Activated T-helper 2 cell treated with anti-CD3 and anti-CD28 coated beads, Interferon-gamma antibody, Interleukin-2, Interleukin-4, amounts not matched to agents 10 μg/mL and 5 μg/mL and 100 μg/mL, durations not matched to agents 14 hours and 24 hours and 36 hours (primary cell): ENCODE measurements at regions of chr13 and their contacts with region 1.

Region 1: DNA sequence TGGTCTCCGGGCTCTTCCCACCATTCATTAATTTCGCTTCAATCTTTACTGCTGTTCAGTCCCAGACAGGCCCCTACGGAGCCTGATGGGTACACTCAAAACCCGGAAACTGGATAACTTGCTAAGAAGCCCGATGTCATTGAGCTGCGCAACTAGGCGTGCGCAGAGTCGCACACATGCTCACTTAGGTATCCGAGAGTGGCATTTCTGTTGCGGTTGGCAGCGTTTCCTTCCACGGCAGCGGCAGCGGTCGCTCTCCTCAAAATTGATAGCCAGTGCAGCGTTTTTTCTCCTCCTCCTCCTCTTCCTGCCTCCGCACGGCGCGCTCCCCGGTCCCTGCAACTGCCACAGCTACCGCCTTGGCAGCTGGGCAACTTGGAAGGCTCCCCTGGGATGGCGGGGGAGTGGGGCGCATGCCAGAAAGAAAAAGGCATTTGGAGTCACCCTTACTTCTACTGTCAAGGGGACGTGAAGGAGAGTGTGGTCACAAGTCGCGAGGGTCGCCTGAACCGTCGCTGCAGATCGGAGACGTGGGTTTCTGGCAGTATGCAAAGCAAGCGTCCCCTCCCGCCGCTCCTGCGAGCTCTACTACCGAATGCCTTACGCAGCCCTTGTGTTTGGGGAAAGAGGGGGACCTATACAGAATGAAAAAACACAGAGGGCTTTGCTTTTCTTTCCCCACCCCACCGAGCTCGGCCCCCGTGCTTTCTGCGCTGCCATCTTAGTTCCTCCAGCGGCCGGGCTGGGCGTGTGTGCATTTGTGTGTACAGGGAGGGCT is 2.4 kb upstream of the MYCBP2 start:
- DNase-seq: peak; percentile 93
- H3K4me3 Mint-ChIP-seq: peak overlapping the region; percentile 99
- H3K27ac Mint-ChIP-seq: peak overlapping the region; percentile 99
- H3K4me1 Mint-ChIP-seq: peaks cover 36% of the 10 kb centered on the region
- H3K27me3 Mint-ChIP-seq: peaks cover 3% of the 10 kb centered on the region

Region 2: DNA sequence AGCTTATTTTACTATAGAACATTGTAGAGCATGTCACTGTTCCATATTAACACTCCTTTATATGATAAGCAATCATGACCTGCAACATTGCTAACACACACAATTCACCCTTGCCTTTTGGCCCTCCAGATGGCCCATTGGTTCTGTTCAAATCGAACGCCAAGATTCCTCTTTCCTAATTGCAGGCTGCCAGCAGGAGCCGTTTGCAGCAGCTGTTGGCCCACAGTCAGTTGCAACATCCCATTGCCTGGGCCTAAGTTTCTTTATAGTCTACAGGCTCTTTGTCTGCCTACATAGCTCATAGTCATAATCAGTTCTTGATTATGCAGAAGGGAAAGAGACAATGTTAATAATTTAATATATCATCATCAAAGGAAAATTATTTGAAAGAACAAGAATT is 480.7 kb before region 1 on chr13:
- intact Hi-C with region 1: no loop called
- DNase-seq: no peak
- H3K4me3 Mint-ChIP-seq: no peak overlapping the region
- H3K27ac Mint-ChIP-seq: no peak overlapping the region
- H3K4me1 Mint-ChIP-seq: no peaks in the 10 kb centered on the region
- H3K27me3 Mint-ChIP-seq: peaks cover 11% of the 10 kb centered on the region

Region 3: GRCh38 chr13:76886292-76887075 is 442.8 kb before region 1 on chr13 and contains the start of gene KCTD12:
- intact Hi-C with region 1: loop called (anchors 10 kb)
- DNase-seq: peak; percentile 75
- H3K4me3 Mint-ChIP-seq: peak within 1 kb of the TSS; percentile 88
- H3K27ac Mint-ChIP-seq: peak within 1 kb of the TSS; percentile 75
- H3K4me1 Mint-ChIP-seq: peaks cover 32% of the 10 kb centered on the region
- H3K27me3 Mint-ChIP-seq: peaks cover 25% of the 10 kb centered on the region
- total RNA-seq, gene KCTD12: 12.7 and 13.2 TPM in 2 replicates

Region 4: GRCh38 chr13:77026818-77027585 is 302.3 kb before region 1 on chr13 and contains the start of gene FBXL3:
- intact Hi-C with region 1: loop called (anchors 1 kb)
- DNase-seq: peak; percentile 76
- H3K4me3 Mint-ChIP-seq: peak within 1 kb of the TSS; percentile 98
- H3K27ac Mint-ChIP-seq: peak within 1 kb of the TSS; percentile 95
- H3K4me1 Mint-ChIP-seq: peaks cover 51% of the 10 kb centered on the region
- H3K27me3 Mint-ChIP-seq: no peaks in the 10 kb centered on the region
- total RNA-seq, gene FBXL3: 38.2 and 44.4 TPM in 2 replicates

Region 5: GRCh38 chr13:77309254-77309653 is 20.1 kb before region 1 on chr13:
- intact Hi-C with region 1: loop called (anchors 2 kb)
- DNase-seq: no peak
- H3K4me3 Mint-ChIP-seq: no peak overlapping the region
- H3K27ac Mint-ChIP-seq: no peak overlapping the region
- H3K4me1 Mint-ChIP-seq: peaks cover 64% of the 10 kb centered on the region
- H3K27me3 Mint-ChIP-seq: no peaks in the 10 kb centered on the region

Region 6: GRCh38 chr13:77374786-77375185 is 45.5 kb after region 1 on chr13:
- intact Hi-C with region 1: no loop called
- DNase-seq: no peak
- H3K4me3 Mint-ChIP-seq: no peak overlapping the region
- H3K27ac Mint-ChIP-seq: no peak overlapping the region
- H3K4me1 Mint-ChIP-seq: no peaks in the 10 kb centered on the region
- H3K27me3 Mint-ChIP-seq: peaks cover 15% of the 10 kb centered on the region

Region 7: DNA sequence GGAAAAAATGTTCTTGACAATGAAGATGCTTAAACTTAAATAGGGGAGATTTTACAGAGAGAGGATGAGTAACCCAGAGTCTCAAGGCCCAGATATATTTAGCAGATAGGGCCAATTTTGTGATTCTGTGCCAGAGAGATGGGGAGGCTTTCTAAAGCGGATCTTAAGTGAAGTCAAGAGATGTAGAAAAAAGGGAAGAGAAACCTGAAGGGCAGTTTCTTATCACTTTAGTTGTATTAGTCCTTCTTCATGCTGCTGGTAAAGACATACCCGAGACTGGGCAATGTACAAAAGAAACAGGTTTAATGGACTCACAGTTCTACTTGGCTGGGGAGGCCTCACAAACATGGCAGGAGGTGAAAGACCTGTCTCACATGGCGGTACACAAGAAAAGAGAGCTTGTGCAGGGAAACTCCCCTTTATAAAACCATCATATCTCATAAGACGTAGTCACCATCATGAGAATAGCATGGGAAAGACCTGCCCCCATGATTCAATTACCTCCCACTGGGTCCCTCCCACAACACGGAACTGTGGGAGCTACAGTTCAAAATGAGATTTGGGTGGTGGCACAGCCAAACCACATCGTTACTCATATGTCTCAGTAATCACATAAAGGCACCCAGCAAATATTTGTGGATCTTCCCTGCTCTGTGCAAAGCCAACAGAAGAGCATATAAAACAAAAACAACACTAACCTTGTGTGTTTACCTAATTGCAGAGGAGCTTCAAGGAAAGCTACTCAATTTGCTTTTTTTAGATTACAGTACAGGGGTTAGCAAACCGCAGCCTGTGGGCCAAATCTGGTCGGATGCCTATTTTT is 100.2 kb after region 1 on chr13:
- intact Hi-C with region 1: loop called (anchors 1 kb)
- DNase-seq: no peak
- H3K4me3 Mint-ChIP-seq: no peak overlapping the region
- H3K27ac Mint-ChIP-seq: peak overlapping the region; percentile 60
- H3K4me1 Mint-ChIP-seq: peaks cover 13% of the 10 kb centered on the region
- H3K27me3 Mint-ChIP-seq: peaks cover 7% of the 10 kb centered on the region

Region 8: GRCh38 chr13:77737583-77738200 is 408.4 kb after region 1 on chr13:
- intact Hi-C with region 1: loop called (anchors 5 kb)
- DNase-seq: no peak
- H3K4me3 Mint-ChIP-seq: no peak overlapping the region
- H3K27ac Mint-ChIP-seq: no peak overlapping the region
- H3K4me1 Mint-ChIP-seq: peaks cover 21% of the 10 kb centered on the region
- H3K27me3 Mint-ChIP-seq: no peaks in the 10 kb centered on the region